ENCODE measurements at regions of chr6 and their contacts with region 1.

Region 1: GRCh38 chr6:170295510-170296422 is 4.9 kb upstream of the DLL1 start:
- DNase-seq: peak; percentile 34
- H3K4me3 Mint-ChIP-seq: peak overlapping the region; percentile 71
- H3K27ac Mint-ChIP-seq: no peak overlapping the region
- H3K4me1 Mint-ChIP-seq: peaks cover 10% of the 10 kb centered on the region
- H3K27me3 Mint-ChIP-seq: peaks cover 47% of the 10 kb centered on the region
- CTCF ChIP-seq: no peak

Region 2: GRCh38 chr6:168895102-168895812 is 1400.5 kb before region 1 on chr6:
- CTCF ChIA-PET with region 1: interaction called, 3 read pairs
- POLR2A ChIA-PET with region 1: no interaction called
- intact Hi-C with region 1: loop called (anchors 10 kb)
- DNase-seq: peak; percentile 75
- H3K4me3 Mint-ChIP-seq: peak overlapping the region; percentile 35
- H3K27ac Mint-ChIP-seq: no peak overlapping the region
- H3K4me1 Mint-ChIP-seq: no peaks in the 10 kb centered on the region
- H3K27me3 Mint-ChIP-seq: peaks cover 35% of the 10 kb centered on the region
- CTCF ChIP-seq: peak; percentile 93

Region 3: DNA sequence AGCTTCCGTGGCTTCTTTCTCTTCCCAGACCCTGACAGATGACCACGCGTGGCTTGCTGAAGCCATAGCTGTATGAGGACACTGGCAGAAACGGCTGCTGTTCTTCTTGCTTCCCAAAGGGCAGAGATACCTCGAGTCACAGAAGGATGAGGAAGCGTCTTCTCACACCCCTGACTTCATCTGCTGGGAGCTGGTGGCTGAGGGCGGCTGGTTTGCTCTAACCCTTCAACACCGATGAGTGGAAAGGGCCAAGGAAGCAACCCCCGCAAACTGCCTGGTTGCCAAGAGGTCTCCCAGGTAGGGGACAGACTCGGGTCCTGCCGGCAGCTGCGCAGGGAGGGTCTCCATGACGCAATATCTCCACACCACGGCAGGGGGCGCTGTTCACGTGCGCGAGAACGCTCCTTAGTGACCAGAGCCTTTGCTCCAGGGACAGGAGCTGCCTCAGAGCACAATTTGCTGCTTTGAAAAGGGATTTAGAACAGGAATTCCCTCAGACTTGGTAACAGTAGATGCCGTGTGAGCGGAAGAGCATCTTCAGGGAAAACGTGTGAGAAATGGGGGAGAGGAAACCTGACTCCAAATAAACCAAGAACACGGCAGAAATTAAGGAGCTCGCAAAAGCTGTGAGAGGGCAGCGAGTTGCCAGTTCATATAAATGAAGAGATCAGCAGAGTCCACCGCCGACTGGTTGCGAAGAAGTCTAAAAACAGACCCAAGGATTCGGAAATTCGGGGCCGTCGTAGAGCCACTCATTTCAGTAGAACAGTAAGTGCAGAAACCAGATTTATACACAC is 464.1 kb before region 1 on chr6:
- CTCF ChIA-PET with region 1: interaction called, 65 read pairs
- POLR2A ChIA-PET with region 1: interaction called, 12 read pairs
- intact Hi-C with region 1: loop called (anchors 1 kb)
- DNase-seq: peak; percentile 66
- H3K4me3 Mint-ChIP-seq: no peak overlapping the region
- H3K27ac Mint-ChIP-seq: no peak overlapping the region
- H3K4me1 Mint-ChIP-seq: peaks cover 6% of the 10 kb centered on the region
- H3K27me3 Mint-ChIP-seq: peaks cover 73% of the 10 kb centered on the region
- CTCF ChIP-seq: peak; percentile 90

Region 4: DNA sequence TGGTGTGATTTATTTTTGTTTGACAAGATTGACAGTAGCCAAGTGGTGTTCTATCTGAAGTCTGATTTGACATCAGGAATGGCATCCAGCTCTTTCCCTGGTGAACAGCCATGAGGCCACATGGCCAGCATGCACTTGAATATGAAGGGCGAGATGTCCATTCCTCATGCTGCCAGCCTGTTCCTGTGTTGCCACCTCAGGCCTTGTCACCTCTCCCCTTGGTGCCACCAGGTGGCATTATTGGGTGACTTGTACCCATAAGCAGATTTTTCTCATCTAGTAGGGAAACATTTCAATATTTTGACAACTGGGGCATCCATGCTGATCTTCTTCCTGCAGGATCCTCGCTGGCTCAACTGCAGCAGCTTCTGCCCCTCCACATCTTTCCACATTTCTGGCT is 345.2 kb before region 1 on chr6:
- CTCF ChIA-PET with region 1: interaction called, 11 read pairs
- POLR2A ChIA-PET with region 1: no interaction called
- intact Hi-C with region 1: no loop called
- DNase-seq: peak; percentile 45
- H3K4me3 Mint-ChIP-seq: no peak overlapping the region
- H3K27ac Mint-ChIP-seq: no peak overlapping the region
- H3K4me1 Mint-ChIP-seq: no peaks in the 10 kb centered on the region
- H3K27me3 Mint-ChIP-seq: peaks cover 27% of the 10 kb centered on the region
- CTCF ChIP-seq: no peak

Region 5: GRCh38 chr6:169969372-169970099 is 326.2 kb before region 1 on chr6:
- CTCF ChIA-PET with region 1: interaction called, 5 read pairs
- POLR2A ChIA-PET with region 1: no interaction called
- intact Hi-C with region 1: loop called (anchors 1 kb)
- DNase-seq: no peak
- H3K4me3 Mint-ChIP-seq: no peak overlapping the region
- H3K27ac Mint-ChIP-seq: peak overlapping the region; percentile 25
- H3K4me1 Mint-ChIP-seq: no peaks in the 10 kb centered on the region
- H3K27me3 Mint-ChIP-seq: peaks cover 25% of the 10 kb centered on the region
- CTCF ChIP-seq: no peak

Region 6: GRCh38 chr6:170178561-170179477 is 116.9 kb before region 1 on chr6:
- CTCF ChIA-PET with region 1: interaction called, 4 read pairs
- POLR2A ChIA-PET with region 1: no interaction called
- intact Hi-C with region 1: loop called (anchors 10 kb)
- DNase-seq: peak; percentile 97
- H3K4me3 Mint-ChIP-seq: peak overlapping the region; percentile 20
- H3K27ac Mint-ChIP-seq: peak overlapping the region; percentile 83
- H3K4me1 Mint-ChIP-seq: peaks cover 13% of the 10 kb centered on the region
- H3K27me3 Mint-ChIP-seq: peaks cover 22% of the 10 kb centered on the region
- CTCF ChIP-seq: no peak

Region 7: DNA sequence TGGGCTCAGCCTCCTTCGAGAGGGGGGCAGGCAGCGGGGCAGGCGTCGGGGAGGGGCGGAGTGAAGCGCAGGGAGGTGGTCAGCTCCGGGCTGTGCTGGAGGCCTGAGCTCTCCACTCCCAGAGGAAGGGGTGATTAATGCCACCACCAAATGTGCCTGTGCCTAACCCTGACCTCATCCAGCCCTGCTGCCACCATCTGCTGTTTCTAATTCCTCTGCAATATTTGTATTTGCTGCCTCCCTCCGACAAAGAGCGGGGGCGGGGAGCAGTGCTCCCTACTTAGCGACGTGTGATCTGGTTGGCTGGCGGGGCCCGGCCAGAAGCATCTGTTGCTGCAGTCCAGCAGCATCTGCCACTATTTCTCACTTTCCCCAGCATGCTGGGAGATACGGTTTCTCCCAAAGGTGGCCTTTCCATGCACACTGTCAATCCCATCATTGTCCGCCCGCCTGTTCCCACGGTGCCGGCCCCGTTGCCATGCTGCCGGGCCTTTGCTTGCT is 51.9 kb before region 1 on chr6:
- CTCF ChIA-PET with region 1: no interaction called
- POLR2A ChIA-PET with region 1: no interaction called
- intact Hi-C with region 1: no loop called
- DNase-seq: no peak
- H3K4me3 Mint-ChIP-seq: no peak overlapping the region
- H3K27ac Mint-ChIP-seq: no peak overlapping the region
- H3K4me1 Mint-ChIP-seq: no peaks in the 10 kb centered on the region
- H3K27me3 Mint-ChIP-seq: no peaks in the 10 kb centered on the region
- CTCF ChIP-seq: no peak

Measured in MCF 10A (cell line).